ENCODE measurements at regions of chr6 and their contacts with region 1.

Region 1: DNA sequence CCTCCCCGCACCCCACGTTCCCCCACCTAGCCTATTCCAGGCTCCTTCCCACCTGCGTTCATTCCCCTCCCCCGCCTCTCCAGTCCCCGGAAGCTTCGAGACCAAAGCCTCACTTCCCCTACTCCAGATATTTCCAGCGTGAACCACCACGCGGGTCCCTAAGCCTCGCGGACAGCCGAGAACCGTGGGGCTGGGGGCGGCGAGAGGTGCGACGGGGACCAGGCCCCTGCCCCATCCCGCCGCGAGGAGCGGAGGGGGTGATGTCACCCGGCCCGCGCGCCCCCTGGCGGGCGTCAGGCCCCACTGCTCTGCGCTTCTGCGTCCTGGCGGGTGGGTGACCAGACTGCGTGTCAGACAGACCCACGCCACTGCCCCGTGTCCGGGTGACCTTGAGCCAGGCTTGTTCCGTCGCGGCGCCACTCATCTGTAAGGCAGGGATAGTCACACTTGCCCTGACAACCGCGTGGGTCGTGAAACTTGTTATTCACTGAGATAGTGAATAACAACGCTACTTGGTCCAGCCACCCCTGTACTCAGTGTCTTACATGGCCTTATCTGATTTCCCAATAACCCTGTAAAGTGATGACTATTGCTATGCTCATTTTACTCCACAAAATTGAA is 9.0 kb upstream of the HSP90AB1 start:
- DNase-seq: peak; percentile 92
- H3K4me3 ChIP-seq: peak overlapping the region; percentile 53 to 62
- H3K27ac ChIP-seq: peak overlapping the region; percentile 84 to 90
- H3K4me1 ChIP-seq: peaks cover 26 to 45% of the 10 kb centered on the region in 2 experiments
- H3K27me3 ChIP-seq: no peaks in the 10 kb centered on the region
- CTCF ChIP-seq: peak; percentile 93
- EP300 ChIP-seq: no peak
- RAD21 ChIP-seq: peak; percentile 58

Region 2: GRCh38 chr6:44096612-44097011 is 141.3 kb before region 1 on chr6:
- CTCF ChIA-PET with region 1: interaction called, 75 read pairs
- POLR2A ChIA-PET with region 1: no interaction called
- DNase-seq: peak; percentile 86
- H3K4me3 ChIP-seq: peak overlapping the region in 1 of 2 experiments; percentile 39; a peak in 1 of 4 replicates
- H3K27ac ChIP-seq: no peak overlapping the region
- H3K4me1 ChIP-seq: no peaks in the 10 kb centered on the region; a peak in 1 of 4 replicates
- H3K27me3 ChIP-seq: no peaks in the 10 kb centered on the region
- CTCF ChIP-seq: peak; percentile 78
- EP300 ChIP-seq: no peak
- RAD21 ChIP-seq: peak; percentile 95

Region 3: GRCh38 chr6:44161997-44162338 is 76.0 kb before region 1 on chr6:
- CTCF ChIA-PET with region 1: interaction called, 128 read pairs
- POLR2A ChIA-PET with region 1: no interaction called
- DNase-seq: no peak
- H3K4me3 ChIP-seq: no peak overlapping the region
- H3K27ac ChIP-seq: no peak overlapping the region
- H3K4me1 ChIP-seq: peaks cover 0 to 3% of the 10 kb centered on the region in 2 experiments; a peak in 1 of 4 replicates
- H3K27me3 ChIP-seq: no peaks in the 10 kb centered on the region
- CTCF ChIP-seq: no peak
- EP300 ChIP-seq: no peak
- RAD21 ChIP-seq: no peak

Region 4: DNA sequence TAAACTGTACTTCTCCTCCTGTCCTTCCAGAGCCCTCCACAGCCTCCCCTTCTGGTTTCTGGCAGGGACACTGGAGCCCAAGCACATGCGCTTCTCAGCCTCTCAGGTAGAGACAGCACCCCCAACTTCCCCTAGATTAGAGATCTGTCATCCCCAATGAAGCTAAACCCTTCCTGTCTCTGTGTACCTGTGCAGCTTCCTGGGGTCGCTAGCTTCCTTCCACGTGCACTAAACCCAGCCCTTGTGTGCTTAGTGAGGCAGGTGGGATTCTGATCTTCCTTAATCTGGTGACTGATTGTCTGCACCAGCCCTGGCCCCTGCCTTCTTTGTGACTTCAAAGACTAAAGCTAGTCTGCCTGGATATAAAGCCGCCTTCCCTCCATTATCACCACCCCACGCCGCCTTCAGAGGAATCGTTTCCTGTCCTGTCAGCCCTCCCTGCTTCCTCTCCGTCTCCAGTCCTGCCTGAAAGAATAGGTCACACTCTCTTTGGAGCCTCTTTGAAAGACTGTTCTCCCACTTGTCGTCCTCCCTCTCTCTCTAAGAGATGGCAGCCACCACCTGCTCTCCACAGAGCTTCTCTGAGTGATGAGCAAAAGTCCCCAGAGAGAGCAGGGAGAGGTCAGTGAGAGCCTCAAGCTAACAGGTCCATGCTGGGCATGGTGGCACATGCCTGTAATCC is 51.8 kb before region 1 on chr6:
- CTCF ChIA-PET with region 1: interaction called, 14 read pairs
- POLR2A ChIA-PET with region 1: no interaction called
- DNase-seq: no peak
- H3K4me3 ChIP-seq: no peak overlapping the region
- H3K27ac ChIP-seq: no peak overlapping the region
- H3K4me1 ChIP-seq: no peaks in the 10 kb centered on the region
- H3K27me3 ChIP-seq: no peaks in the 10 kb centered on the region; the same call in 1 of the 2 replicates
- CTCF ChIP-seq: no peak
- EP300 ChIP-seq: no peak
- RAD21 ChIP-seq: no peak

Region 5: GRCh38 chr6:44221291-44221960 is 16.5 kb before region 1 on chr6:
- CTCF ChIA-PET with region 1: interaction called, 224 read pairs
- POLR2A ChIA-PET with region 1: interaction called, 20 read pairs
- DNase-seq: peak; percentile 90
- H3K4me3 ChIP-seq: no peak overlapping the region; a peak in 1 of 4 replicates
- H3K27ac ChIP-seq: peak overlapping the region; percentile 52 to 98
- H3K4me1 ChIP-seq: peaks cover 17 to 65% of the 10 kb centered on the region in 2 experiments
- H3K27me3 ChIP-seq: no peaks in the 10 kb centered on the region
- CTCF ChIP-seq: peak; percentile 83
- EP300 ChIP-seq: no peak
- RAD21 ChIP-seq: peak; percentile 76

Region 6: DNA sequence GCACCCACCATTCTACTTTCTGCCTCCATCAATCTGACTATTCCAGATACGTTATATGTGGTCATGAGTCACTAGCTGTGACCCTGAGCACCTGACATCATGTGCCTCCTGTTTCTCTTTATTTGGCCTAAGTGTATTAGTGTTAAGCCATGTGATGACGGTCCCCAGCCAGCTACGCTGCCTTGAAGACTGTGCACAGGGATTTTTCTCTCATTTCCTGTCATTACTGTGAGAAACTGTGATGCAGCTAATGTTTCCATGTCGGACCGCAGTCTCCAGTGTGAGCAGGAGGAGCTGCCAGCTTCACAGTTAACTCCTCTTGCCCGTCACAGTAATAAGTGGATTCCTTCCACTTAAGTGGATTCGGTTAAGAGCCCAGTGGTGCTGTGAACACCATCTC is 94.7 kb after region 1 on chr6:
- CTCF ChIA-PET with region 1: interaction called, 13 read pairs
- POLR2A ChIA-PET with region 1: no interaction called
- DNase-seq: no peak
- H3K4me3 ChIP-seq: no peak overlapping the region
- H3K27ac ChIP-seq: no peak overlapping the region
- H3K4me1 ChIP-seq: peaks cover 0 to 6% of the 10 kb centered on the region in 2 experiments; a peak in 1 of 4 replicates
- H3K27me3 ChIP-seq: peaks cover 38% of the 10 kb centered on the region
- CTCF ChIP-seq: no peak
- EP300 ChIP-seq: no peak
- RAD21 ChIP-seq: no peak

Region 7: GRCh38 chr6:44397424-44398164 is 159.7 kb after region 1 on chr6:
- CTCF ChIA-PET with region 1: no interaction called
- POLR2A ChIA-PET with region 1: no interaction called
- DNase-seq: peak; percentile 64
- H3K4me3 ChIP-seq: no peak overlapping the region
- H3K27ac ChIP-seq: peak overlapping the region in 1 of 2 experiments; percentile 80; a peak in 3 of 4 replicates
- H3K4me1 ChIP-seq: peaks cover 0 to 10% of the 10 kb centered on the region in 2 experiments; a peak in 3 of 4 replicates
- H3K27me3 ChIP-seq: no peaks in the 10 kb centered on the region
- CTCF ChIP-seq: peak; percentile 16; the same call in 1 of the 2 replicates
- EP300 ChIP-seq: peak in 1 of 2 experiments; percentile 67; a peak in 2 of 4 replicates
- RAD21 ChIP-seq: peak; percentile 8; the same call in 1 of the 2 replicates

Region 8: GRCh38 chr6:44415873-44416502 is 178.1 kb after region 1 on chr6:
- CTCF ChIA-PET with region 1: no interaction called
- POLR2A ChIA-PET with region 1: no interaction called
- DNase-seq: no peak
- H3K4me3 ChIP-seq: no peak overlapping the region
- H3K27ac ChIP-seq: 0 out of 4 replicates have a peak overlapping the region, but pooled peaks of 1 of the 2 experiments have one; percentile 6
- H3K4me1 ChIP-seq: peaks cover 3% of the 10 kb centered on the region in 2 experiments; a peak in 1 of 4 replicates
- H3K27me3 ChIP-seq: no peaks in the 10 kb centered on the region
- CTCF ChIP-seq: no peak
- EP300 ChIP-seq: no peak
- RAD21 ChIP-seq: no peak

Measured in SK-N-SH (cell line).